ENCODE measurements at regions of chr5 and their contacts with region 1.

Region 1: DNA sequence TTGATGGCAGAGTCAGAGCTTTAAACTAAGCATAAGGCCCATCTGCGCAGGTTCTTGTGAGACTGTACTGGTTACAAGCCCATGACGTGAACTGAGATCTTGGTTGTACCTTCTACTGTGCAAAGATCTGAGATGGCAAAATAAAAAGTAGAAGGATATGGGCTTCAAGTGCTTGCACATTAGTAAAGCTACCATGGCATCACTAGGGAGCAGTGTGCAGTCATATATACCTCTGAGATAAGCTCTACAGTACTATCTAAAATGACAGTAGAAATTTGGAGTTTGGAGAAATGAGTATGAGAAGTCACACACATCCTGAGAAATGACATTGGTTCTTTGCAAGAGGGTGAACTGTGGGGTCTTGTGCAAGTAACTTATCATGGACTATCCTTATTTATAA is 408.2 kb upstream of the PRR16 start:
- DNase-seq: peak; percentile 26
- H3K4me3 ChIP-seq: no peak overlapping the region
- CTCF ChIP-seq: peak; percentile 52

Region 2: GRCh38 chr5:120457839-120458507 is 402.1 kb after region 1 on chr5:
- CTCF ChIA-PET with region 1: interaction called, 12 read pairs
- POLR2A ChIA-PET with region 1: no interaction called
- DNase-seq: no peak
- H3K4me3 ChIP-seq: no peak overlapping the region
- CTCF ChIP-seq: peak; percentile 49